Naive thymus-derived CD4-positive, alpha-beta T cell (primary cell): ENCODE measurements at regions of chr17 and their contacts with region 1.

Region 1: GRCh38 chr17:81222906-81223761 is at the start of gene CEP131:
- DNase-seq: peak; percentile 96 to 100 (median 98)
- ATAC-seq: peak; percentile 96
- H3K4me3 ChIP-seq: peak within 1 kb of the TSS; percentile 60
- H3K4me3 Mint-ChIP-seq: peak within 1 kb of the TSS; percentile 74 to 89 (median 86)
- H3K27ac ChIP-seq: peak within 1 kb of the TSS; percentile 68
- H3K27ac Mint-ChIP-seq: peak within 1 kb of the TSS; percentile 7 to 84 (median 74)
- H3K4me1 ChIP-seq: peaks cover 11 to 19% of the 10 kb centered on the region in 2 donors
- H3K4me1 Mint-ChIP-seq: peaks cover 13 to 24% (median 20%) of the 10 kb centered on the region in 7 donors
- H3K27me3 ChIP-seq: no peaks in the 10 kb centered on the region
- H3K27me3 Mint-ChIP-seq: peaks cover 0 to 8% (median 0%) of the 10 kb centered on the region in 5 donors
- total RNA-seq, gene CEP131: 8.1 to 13.0 (median 10.0) TPM

Region 2: GRCh38 chr17:80147035-80147836 is 1075.9 kb before region 1 on chr17 and contains the start of gene EIF4A3:
- CTCF ChIA-PET with region 1: no interaction called
- POLR2A ChIA-PET with region 1: no interaction called
- intact Hi-C with region 1: loop called in 1 of 2 experiments (anchors 10 kb)
- DNase-seq: peak; percentile 84 to 98 (median 96)
- ATAC-seq: peak; percentile 97
- H3K4me3 ChIP-seq: peak within 1 kb of the TSS; percentile 64
- H3K4me3 Mint-ChIP-seq: peak within 1 kb of the TSS; percentile 81 to 100 (median 98)
- H3K27ac ChIP-seq: peak within 1 kb of the TSS; percentile 91
- H3K27ac Mint-ChIP-seq: peak within 1 kb of the TSS; percentile 68 to 100 (median 97)
- H3K4me1 ChIP-seq: peaks cover 19 to 21% of the 10 kb centered on the region in 2 donors
- H3K4me1 Mint-ChIP-seq: peaks cover 15 to 59% (median 44%) of the 10 kb centered on the region in 7 donors
- H3K27me3 ChIP-seq: no peaks in the 10 kb centered on the region
- H3K27me3 Mint-ChIP-seq: no peaks in the 10 kb centered on the region
- total RNA-seq, gene EIF4A3: 48.6 to 128 (median 75.9) TPM

Region 3: GRCh38 chr17:80544655-80545498 is 678.3 kb before region 1 on chr17 and contains the start of gene RPTOR:
- CTCF ChIA-PET with region 1: no interaction called
- POLR2A ChIA-PET with region 1: no interaction called
- intact Hi-C with region 1: loop called in 1 of 2 experiments (anchors 2 kb)
- DNase-seq: peak; percentile 71 to 91 (median 86)
- ATAC-seq: peak; percentile 100
- H3K4me3 ChIP-seq: peak within 1 kb of the TSS; percentile 97
- H3K4me3 Mint-ChIP-seq: peak within 1 kb of the TSS; percentile 88 to 97 (median 94)
- H3K27ac ChIP-seq: peak within 1 kb of the TSS; percentile 79
- H3K27ac Mint-ChIP-seq: peak within 1 kb of the TSS; percentile 85 to 97 (median 93)
- H3K4me1 ChIP-seq: peaks cover 13 to 15% of the 10 kb centered on the region in 2 donors
- H3K4me1 Mint-ChIP-seq: peaks cover 17 to 39% (median 32%) of the 10 kb centered on the region in 7 donors
- H3K27me3 ChIP-seq: no peaks in the 10 kb centered on the region
- H3K27me3 Mint-ChIP-seq: peaks cover 0 to 4% (median 3%) of the 10 kb centered on the region in 5 donors
- total RNA-seq, gene RPTOR: 53.7 to 89.8 (median 69.5) TPM

Region 4: GRCh38 chr17:81119223-81120148 is 103.6 kb before region 1 on chr17:
- CTCF ChIA-PET with region 1: no interaction called
- POLR2A ChIA-PET with region 1: no interaction called
- intact Hi-C with region 1: loop called (anchors 1 kb)
- DNase-seq: peak; percentile 72 to 95 (median 79)
- ATAC-seq: peak; percentile 87
- H3K4me3 ChIP-seq: no peak overlapping the region
- H3K4me3 Mint-ChIP-seq: peak overlapping the region; percentile 36 to 80 (median 67)
- H3K27ac ChIP-seq: no peak overlapping the region
- H3K27ac Mint-ChIP-seq: peak overlapping the region in 4 of 9 donors; percentile 49 to 91 (median 72)
- H3K4me1 ChIP-seq: no peaks in the 10 kb centered on the region
- H3K4me1 Mint-ChIP-seq: peaks cover 0 to 4% (median 0%) of the 10 kb centered on the region in 7 donors
- H3K27me3 ChIP-seq: no peaks in the 10 kb centered on the region
- H3K27me3 Mint-ChIP-seq: no peaks in the 10 kb centered on the region

Region 5: GRCh38 chr17:81165246-81166032 is 57.7 kb before region 1 on chr17 and contains the start of gene PVALEF:
- CTCF ChIA-PET with region 1: no interaction called
- POLR2A ChIA-PET with region 1: no interaction called
- intact Hi-C with region 1: no loop called
- DNase-seq: no peak
- ATAC-seq: no peak
- H3K4me3 ChIP-seq: no peak within 1 kb of the TSS
- H3K4me3 Mint-ChIP-seq: peak within 1 kb of the TSS in 6 of 10 donors; percentile 23 to 76 (median 32)
- H3K27ac ChIP-seq: no peak within 1 kb of the TSS
- H3K27ac Mint-ChIP-seq: no peak within 1 kb of the TSS
- H3K4me1 ChIP-seq: no peaks in the 10 kb centered on the region
- H3K4me1 Mint-ChIP-seq: peaks cover 0 to 5% (median 0%) of the 10 kb centered on the region in 7 donors
- H3K27me3 ChIP-seq: no peaks in the 10 kb centered on the region
- H3K27me3 Mint-ChIP-seq: peaks cover 0 to 21% (median 17%) of the 10 kb centered on the region in 5 donors
- total RNA-seq, gene PVALEF: not detected

Region 6: GRCh38 chr17:81294856-81295680 is 71.9 kb after region 1 on chr17 and contains the start of gene SLC38A10:
- CTCF ChIA-PET with region 1: no interaction called
- POLR2A ChIA-PET with region 1: no interaction called
- intact Hi-C with region 1: loop called in 1 of 2 experiments (anchors 2 kb)
- DNase-seq: peak; percentile 81 to 93 (median 89)
- ATAC-seq: peak; percentile 91
- H3K4me3 ChIP-seq: peak within 1 kb of the TSS; percentile 82
- H3K4me3 Mint-ChIP-seq: peak within 1 kb of the TSS; percentile 92 to 99 (median 97)
- H3K27ac ChIP-seq: peak within 1 kb of the TSS; percentile 94
- H3K27ac Mint-ChIP-seq: peak within 1 kb of the TSS; percentile 92 to 98 (median 96)
- H3K4me1 ChIP-seq: peaks cover 22% of the 10 kb centered on the region in 2 donors
- H3K4me1 Mint-ChIP-seq: peaks cover 18 to 50% (median 36%) of the 10 kb centered on the region in 7 donors
- H3K27me3 ChIP-seq: no peaks in the 10 kb centered on the region
- H3K27me3 Mint-ChIP-seq: no peaks in the 10 kb centered on the region
- total RNA-seq, gene SLC38A10: 54.9 to 122 (median 86.5) TPM

Region 7: DNA sequence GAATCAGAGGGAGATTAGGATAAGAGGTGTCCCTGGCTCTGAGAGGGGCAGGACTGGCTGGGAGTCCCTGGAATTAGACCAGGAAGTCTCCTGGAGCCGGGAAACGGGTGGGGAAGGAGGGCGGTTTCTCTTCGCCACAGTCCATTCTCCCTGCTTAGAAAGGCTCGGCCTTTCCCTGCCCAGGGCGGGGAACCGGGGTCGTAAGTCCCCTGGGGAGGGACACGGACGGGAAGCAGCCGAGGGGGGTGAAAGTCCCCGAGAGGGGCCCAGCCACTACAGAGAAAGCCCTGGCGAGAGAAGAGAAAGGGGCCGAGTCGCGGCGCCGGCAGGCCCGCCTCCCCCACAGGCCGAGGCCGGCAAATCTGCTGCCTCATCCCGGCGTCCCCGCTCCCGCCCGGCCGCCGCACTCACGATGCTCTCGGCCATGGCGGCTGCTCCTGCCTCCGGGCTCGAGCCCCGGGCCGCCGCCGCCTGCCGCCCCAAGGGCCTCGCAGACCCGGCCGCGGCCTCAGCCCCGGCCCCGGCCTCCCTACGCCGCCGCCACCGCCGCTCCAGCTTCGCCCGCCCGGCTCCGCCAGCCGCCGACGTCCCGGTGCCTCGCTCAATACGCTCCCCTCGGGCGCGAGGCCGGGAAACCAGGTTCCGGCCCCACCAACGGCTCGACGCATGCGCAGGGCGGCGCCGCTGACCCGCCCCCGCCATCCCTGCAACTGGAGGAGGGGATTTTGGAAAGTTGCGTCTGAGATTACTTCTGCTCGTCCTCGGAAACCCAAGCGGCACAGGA is 413.6 kb after region 1 on chr17 and contains the starts of genes NPLOC4 and TSPAN10:
- CTCF ChIA-PET with region 1: no interaction called
- POLR2A ChIA-PET with region 1: no interaction called
- intact Hi-C with region 1: loop called in 1 of 2 experiments (anchors 1 kb)
- DNase-seq: peak; percentile 62 to 94 (median 80)
- ATAC-seq: peak; percentile 95
- H3K4me3 ChIP-seq: peak within 1 kb of the TSS; percentile 86
- H3K4me3 Mint-ChIP-seq: peak within 1 kb of the TSS; percentile 91 to 98 (median 95)
- H3K27ac ChIP-seq: peak within 1 kb of the TSS; percentile 87
- H3K27ac Mint-ChIP-seq: peak within 1 kb of the TSS; percentile 25 to 94 (median 89)
- H3K4me1 ChIP-seq: peaks cover 10 to 12% of the 10 kb centered on the region in 2 donors
- H3K4me1 Mint-ChIP-seq: peaks cover 13 to 37% (median 26%) of the 10 kb centered on the region in 7 donors
- H3K27me3 ChIP-seq: no peaks in the 10 kb centered on the region
- H3K27me3 Mint-ChIP-seq: no peaks in the 10 kb centered on the region
- total RNA-seq, gene NPLOC4: 77.7 to 125 (median 93.6) TPM
- total RNA-seq, gene TSPAN10: 0.32 to 1.9 (median 0.51) TPM